ENCODE measurements at regions of chr3 and their contacts with region 1.

Region 1: GRCh38 chr3:8111069-8111798 is 390.4 kb upstream of the LMCD1 start:
- DNase-seq: peak; percentile 91
- H3K4me3 ChIP-seq: peak overlapping the region in 2 of 3 experiments; percentile 31 to 43
- H3K27ac ChIP-seq: peak overlapping the region; percentile 37
- H3K4me1 ChIP-seq: peaks cover 6% of the 10 kb centered on the region
- H3K27me3 ChIP-seq: no peaks in the 10 kb centered on the region
- CTCF ChIP-seq: peak; percentile 67 to 82
- POLR2A ChIP-seq: no peak

Region 2: DNA sequence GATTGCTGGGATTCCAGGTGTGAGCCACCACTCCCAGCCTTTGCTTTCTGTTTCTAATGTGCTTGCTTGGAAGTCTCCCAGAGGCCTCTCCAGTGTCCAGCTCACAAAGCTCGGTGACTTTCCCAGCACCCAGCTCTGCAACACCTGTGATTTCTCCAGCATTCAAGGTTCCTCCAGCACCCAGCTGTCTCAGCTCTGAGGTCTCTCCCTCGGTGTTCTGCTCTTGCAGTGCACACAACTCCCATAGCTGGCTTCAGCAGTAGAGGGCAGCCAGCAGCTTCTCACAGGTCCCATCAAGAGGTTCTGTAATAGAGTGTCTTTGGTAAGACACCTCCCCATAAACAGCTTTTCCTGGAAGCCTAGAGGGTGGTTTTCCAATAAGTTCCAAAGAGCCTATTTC is 1175.3 kb before region 1 on chr3:
- CTCF ChIA-PET with region 1: interaction called, 7 read pairs
- POLR2A ChIA-PET with region 1: no interaction called
- dilution Hi-C with region 1: no loop called
- intact Hi-C with region 1: loop called (anchors 1 kb)
- DNase-seq: no peak
- H3K4me3 ChIP-seq: no peak overlapping the region
- H3K27ac ChIP-seq: no peak overlapping the region
- H3K4me1 ChIP-seq: no peaks in the 10 kb centered on the region
- H3K27me3 ChIP-seq: no peaks in the 10 kb centered on the region
- CTCF ChIP-seq: no peak
- POLR2A ChIP-seq: no peak

Region 3: DNA sequence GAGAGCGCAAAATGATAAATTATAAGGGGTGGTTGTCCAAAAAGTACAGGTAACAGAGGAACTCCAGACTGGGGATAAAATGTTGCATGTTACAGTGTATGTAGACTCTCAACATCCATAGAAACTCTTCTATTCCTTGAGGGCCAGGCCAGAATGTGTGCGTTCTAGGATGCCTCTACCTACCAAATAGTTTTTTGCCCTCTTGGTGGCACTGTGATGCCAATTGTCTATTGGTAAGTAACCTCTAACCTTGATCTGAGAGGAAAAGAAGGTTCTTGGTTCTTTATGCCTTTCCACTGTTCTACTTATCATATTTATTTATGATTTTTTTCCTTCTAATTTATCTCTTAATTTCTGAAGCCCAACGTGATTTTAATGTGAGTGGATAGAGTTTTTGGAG is 825.7 kb before region 1 on chr3:
- CTCF ChIA-PET with region 1: interaction called, 7 read pairs
- POLR2A ChIA-PET with region 1: no interaction called
- dilution Hi-C with region 1: no loop called
- intact Hi-C with region 1: loop called (anchors 1 kb)
- DNase-seq: peak; percentile 49
- H3K4me3 ChIP-seq: no peak overlapping the region
- H3K27ac ChIP-seq: no peak overlapping the region
- H3K4me1 ChIP-seq: peaks cover 28% of the 10 kb centered on the region
- H3K27me3 ChIP-seq: no peaks in the 10 kb centered on the region
- CTCF ChIP-seq: peak in 1 of 2 donors; percentile 14
- POLR2A ChIP-seq: no peak

Region 4: DNA sequence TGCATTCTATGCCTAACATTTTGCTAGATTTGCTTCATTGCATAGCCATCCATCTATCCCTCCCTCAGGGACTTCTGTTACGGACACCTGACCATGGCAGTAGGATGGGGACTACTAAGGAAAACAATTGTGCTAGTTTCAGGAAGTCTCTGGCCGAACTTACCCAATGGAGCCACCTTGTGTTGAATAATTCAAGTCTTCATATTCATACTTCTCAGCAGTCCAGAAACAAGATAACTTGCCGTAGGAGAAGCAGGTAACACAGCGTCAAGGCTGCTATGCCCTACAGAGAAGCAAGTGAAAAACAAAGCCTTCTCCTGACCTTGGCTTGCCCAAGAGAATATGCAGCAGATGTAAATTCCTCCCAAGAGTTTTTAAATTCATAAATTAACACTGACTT is 565.0 kb before region 1 on chr3:
- CTCF ChIA-PET with region 1: interaction called, 4 read pairs
- POLR2A ChIA-PET with region 1: no interaction called
- dilution Hi-C with region 1: no loop called
- intact Hi-C with region 1: loop called (anchors 1 kb)
- DNase-seq: peak; percentile 79
- H3K4me3 ChIP-seq: no peak overlapping the region
- H3K27ac ChIP-seq: no peak overlapping the region
- H3K4me1 ChIP-seq: no peaks in the 10 kb centered on the region
- H3K27me3 ChIP-seq: no peaks in the 10 kb centered on the region
- CTCF ChIP-seq: peak; percentile 6 to 13
- POLR2A ChIP-seq: no peak

Region 5: DNA sequence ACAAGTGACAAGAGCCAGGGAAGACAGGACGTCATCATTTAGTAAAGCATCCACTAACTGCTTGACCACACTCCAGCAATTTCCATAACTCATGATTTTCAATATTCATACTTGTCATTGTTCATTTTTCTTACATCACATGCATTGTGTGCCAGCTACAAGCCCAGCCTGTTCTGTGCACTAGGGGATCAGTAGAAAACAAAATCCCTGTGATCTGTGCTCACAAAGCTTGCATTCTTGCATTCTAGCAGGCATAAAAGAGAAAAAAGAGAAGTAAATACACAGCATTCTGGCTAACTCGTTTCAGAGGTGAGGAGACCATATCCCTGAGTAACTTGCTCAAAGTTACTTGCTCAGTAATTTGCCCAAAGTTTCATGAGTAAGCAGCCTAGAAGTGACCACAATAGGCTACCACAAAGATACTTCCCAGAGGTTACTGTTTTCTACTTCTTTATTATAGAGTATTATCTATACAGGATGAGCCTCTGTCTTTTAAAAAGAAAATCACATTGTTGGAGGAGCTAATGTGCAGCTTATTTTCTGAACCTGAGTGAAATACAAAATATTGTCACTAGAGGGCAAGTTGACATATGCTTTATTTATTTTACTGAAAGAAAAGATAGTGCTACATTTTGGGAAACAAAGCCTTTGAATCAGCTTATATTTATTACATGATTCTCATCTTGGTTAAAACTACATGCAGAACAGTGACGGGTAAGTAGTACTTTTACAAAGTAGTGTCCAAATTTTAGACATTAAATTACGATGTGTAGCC is 311.0 kb before region 1 on chr3:
- CTCF ChIA-PET with region 1: interaction called, 54 read pairs
- POLR2A ChIA-PET with region 1: no interaction called
- dilution Hi-C with region 1: no loop called
- intact Hi-C with region 1: loop called (anchors 1 kb)
- DNase-seq: peak; percentile 34
- H3K4me3 ChIP-seq: no peak overlapping the region
- H3K27ac ChIP-seq: no peak overlapping the region
- H3K4me1 ChIP-seq: no peaks in the 10 kb centered on the region
- H3K27me3 ChIP-seq: no peaks in the 10 kb centered on the region
- CTCF ChIP-seq: peak; percentile 6
- POLR2A ChIP-seq: no peak